B cell (primary cell): ENCODE measurements at regions of chr2 and their contacts with region 1.

Region 1: GRCh38 chr2:30165050-30165520 is 18.3 kb downstream of the YPEL5 start:
- DNase-seq: peak; percentile 87
- ATAC-seq: peak; percentile 100
- H3K4me3 ChIP-seq: no peak overlapping the region
- H3K4me3 Mint-ChIP-seq: no peak overlapping the region
- H3K27ac ChIP-seq: no peak overlapping the region
- H3K27ac Mint-ChIP-seq: no peak overlapping the region
- H3K4me1 ChIP-seq: peaks cover 8% of the 10 kb centered on the region in 2 donors
- H3K4me1 Mint-ChIP-seq: peaks cover 16% of the 10 kb centered on the region
- H3K27me3 ChIP-seq: no peaks in the 10 kb centered on the region
- H3K27me3 Mint-ChIP-seq: no peaks in the 10 kb centered on the region
- CTCF ChIP-seq: peak; percentile 85

Region 2: DNA sequence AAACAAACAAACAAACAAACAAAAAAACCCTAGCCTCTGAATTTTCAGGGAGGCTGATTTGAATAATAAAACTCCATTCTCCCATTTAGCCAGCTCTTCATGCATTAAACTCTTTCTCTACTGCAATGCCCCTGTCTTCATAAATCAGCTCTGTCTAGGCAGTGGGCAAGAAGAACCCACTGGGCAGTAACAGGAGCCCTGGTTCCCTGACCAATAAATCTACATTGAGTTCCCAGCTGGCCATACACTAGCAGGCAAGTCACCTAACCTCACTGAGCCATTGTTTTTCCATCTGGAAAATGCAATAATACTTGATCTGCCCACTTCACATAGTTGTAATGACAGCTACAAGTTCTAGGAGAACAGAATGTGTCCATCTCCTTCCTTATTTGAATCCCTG is 75.9 kb before region 1 on chr2:
- CTCF ChIA-PET with region 1: interaction called, 23 read pairs
- POLR2A ChIA-PET with region 1: no interaction called
- intact Hi-C with region 1: loop called (anchors 2 kb)
- DNase-seq: no peak
- ATAC-seq: no peak
- H3K4me3 ChIP-seq: no peak overlapping the region
- H3K4me3 Mint-ChIP-seq: no peak overlapping the region
- H3K27ac ChIP-seq: no peak overlapping the region
- H3K27ac Mint-ChIP-seq: no peak overlapping the region
- H3K4me1 ChIP-seq: no peaks in the 10 kb centered on the region
- H3K4me1 Mint-ChIP-seq: peaks cover 3% of the 10 kb centered on the region
- H3K27me3 ChIP-seq: peaks cover 0 to 24% (median 10%) of the 10 kb centered on the region in 4 experiments
- H3K27me3 Mint-ChIP-seq: peaks cover 42% of the 10 kb centered on the region
- CTCF ChIP-seq: no peak

Region 3: DNA sequence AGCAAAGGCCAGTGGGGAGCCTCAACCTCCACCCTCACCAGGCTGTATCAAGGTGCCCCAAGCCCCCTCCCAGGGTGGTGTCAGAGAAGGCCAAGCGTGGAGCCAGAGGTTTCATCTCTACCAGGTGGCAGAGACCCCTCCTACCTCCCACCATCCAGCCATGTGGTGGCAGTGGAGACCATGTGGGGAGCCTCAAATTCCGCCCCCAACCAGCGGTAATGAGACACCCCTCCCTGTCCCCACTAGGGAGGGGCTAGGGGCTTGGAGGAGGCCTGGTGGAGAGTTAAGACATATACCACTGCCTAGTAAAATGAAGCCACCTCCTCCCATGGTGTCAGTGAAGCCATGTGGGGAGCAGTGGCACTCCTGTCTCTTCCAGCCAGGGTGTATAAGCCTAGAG is 42.7 kb before region 1 on chr2:
- CTCF ChIA-PET with region 1: no interaction called
- POLR2A ChIA-PET with region 1: no interaction called
- intact Hi-C with region 1: no loop called
- DNase-seq: no peak
- ATAC-seq: no peak
- H3K4me3 ChIP-seq: no peak overlapping the region
- H3K4me3 Mint-ChIP-seq: no peak overlapping the region
- H3K27ac ChIP-seq: no peak overlapping the region
- H3K27ac Mint-ChIP-seq: no peak overlapping the region
- H3K4me1 ChIP-seq: no peaks in the 10 kb centered on the region
- H3K4me1 Mint-ChIP-seq: no peaks in the 10 kb centered on the region
- H3K27me3 ChIP-seq: peaks cover 0 to 28% (median 7%) of the 10 kb centered on the region in 4 experiments
- H3K27me3 Mint-ChIP-seq: peaks cover 32% of the 10 kb centered on the region
- CTCF ChIP-seq: no peak

Region 4: DNA sequence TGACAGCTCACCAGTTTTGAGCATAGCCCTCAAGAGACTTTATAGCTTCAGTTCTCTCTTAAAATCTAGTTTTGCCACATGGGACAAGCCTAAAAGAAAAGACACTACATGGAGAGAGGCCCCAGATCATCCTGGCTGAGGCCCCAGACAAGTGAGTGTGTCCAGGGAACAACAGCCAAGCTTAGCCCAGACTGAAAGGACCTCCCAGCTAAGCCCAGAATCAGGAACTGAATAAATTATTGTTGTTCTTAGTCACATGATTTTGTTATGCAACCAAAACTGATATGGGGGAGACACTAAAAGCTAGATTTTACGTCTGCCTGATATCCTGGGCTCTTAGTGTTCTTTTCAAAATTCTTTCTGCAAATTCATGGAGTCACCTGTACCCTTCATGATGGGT is 36.9 kb after region 1 on chr2:
- CTCF ChIA-PET with region 1: interaction called, 116 read pairs
- POLR2A ChIA-PET with region 1: no interaction called
- intact Hi-C with region 1: no loop called
- DNase-seq: no peak
- ATAC-seq: no peak
- H3K4me3 ChIP-seq: no peak overlapping the region
- H3K4me3 Mint-ChIP-seq: no peak overlapping the region
- H3K27ac ChIP-seq: no peak overlapping the region
- H3K27ac Mint-ChIP-seq: no peak overlapping the region
- H3K4me1 ChIP-seq: no peaks in the 10 kb centered on the region
- H3K4me1 Mint-ChIP-seq: no peaks in the 10 kb centered on the region
- H3K27me3 ChIP-seq: no peaks in the 10 kb centered on the region
- H3K27me3 Mint-ChIP-seq: no peaks in the 10 kb centered on the region
- CTCF ChIP-seq: no peak

Region 5: DNA sequence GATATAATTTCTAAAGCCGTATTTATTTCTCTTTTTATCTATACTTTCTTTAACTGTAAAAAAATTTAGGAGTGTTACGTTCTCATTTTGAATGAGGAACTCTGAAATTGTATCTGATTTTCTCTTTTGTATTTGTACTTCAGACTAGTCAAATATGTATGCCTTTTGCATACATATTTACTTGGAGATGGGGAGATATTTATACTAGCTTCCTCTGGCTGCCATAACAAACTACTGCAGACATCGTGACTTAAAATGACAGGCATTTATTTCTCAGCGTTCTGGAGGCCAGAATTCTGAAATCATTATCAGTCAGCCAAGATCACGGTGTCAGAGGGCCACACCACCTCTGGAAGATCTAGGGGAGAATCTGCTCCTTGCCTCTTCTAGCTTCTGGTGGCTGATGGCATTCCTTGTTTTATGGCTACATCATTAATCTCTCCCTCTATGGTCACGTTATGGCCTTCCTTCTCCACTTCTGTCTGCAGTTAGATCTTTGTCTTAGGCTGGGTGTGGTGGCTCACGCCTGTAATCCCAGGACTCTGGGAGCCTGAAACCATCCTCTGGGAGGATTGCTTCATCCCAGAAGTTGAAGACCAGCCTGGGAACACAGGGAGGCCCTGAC is 290.1 kb after region 1 on chr2:
- CTCF ChIA-PET with region 1: no interaction called
- POLR2A ChIA-PET with region 1: no interaction called
- intact Hi-C with region 1: no loop called
- DNase-seq: no peak
- ATAC-seq: no peak
- H3K4me3 ChIP-seq: no peak overlapping the region
- H3K4me3 Mint-ChIP-seq: no peak overlapping the region
- H3K27ac ChIP-seq: no peak overlapping the region
- H3K27ac Mint-ChIP-seq: no peak overlapping the region
- H3K4me1 ChIP-seq: peaks cover 13 to 17% of the 10 kb centered on the region in 2 donors
- H3K4me1 Mint-ChIP-seq: peaks cover 43% of the 10 kb centered on the region
- H3K27me3 ChIP-seq: no peaks in the 10 kb centered on the region
- H3K27me3 Mint-ChIP-seq: no peaks in the 10 kb centered on the region
- CTCF ChIP-seq: no peak

Region 6: DNA sequence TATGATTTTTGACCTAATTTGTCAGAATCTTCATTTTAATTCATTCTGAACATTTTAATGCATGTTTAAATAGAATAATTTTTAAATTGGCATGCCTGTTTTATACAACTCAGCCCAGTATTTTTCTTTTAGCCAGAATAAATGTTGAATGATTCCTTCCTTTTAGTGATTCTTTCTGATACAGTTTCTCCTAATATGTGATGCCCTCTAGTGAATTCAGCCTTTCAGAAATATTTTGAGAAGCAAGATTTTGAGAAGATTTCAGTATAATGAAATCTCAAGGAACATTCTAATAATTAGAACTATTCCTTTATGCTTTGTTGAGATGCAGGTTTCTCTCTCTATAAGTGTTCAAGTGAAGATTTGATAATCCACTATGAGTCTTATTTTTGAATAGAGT is 310.5 kb after region 1 on chr2:
- CTCF ChIA-PET with region 1: interaction called, 65 read pairs
- POLR2A ChIA-PET with region 1: no interaction called
- intact Hi-C with region 1: loop called (anchors 1 kb)
- DNase-seq: no peak
- ATAC-seq: no peak
- H3K4me3 ChIP-seq: no peak overlapping the region
- H3K4me3 Mint-ChIP-seq: no peak overlapping the region
- H3K27ac ChIP-seq: no peak overlapping the region
- H3K27ac Mint-ChIP-seq: no peak overlapping the region
- H3K4me1 ChIP-seq: peaks cover 8 to 17% of the 10 kb centered on the region in 2 donors
- H3K4me1 Mint-ChIP-seq: peaks cover 38% of the 10 kb centered on the region
- H3K27me3 ChIP-seq: no peaks in the 10 kb centered on the region
- H3K27me3 Mint-ChIP-seq: no peaks in the 10 kb centered on the region
- CTCF ChIP-seq: no peak

Region 7: GRCh38 chr2:30565851-30566358 is 400.8 kb after region 1 on chr2:
- CTCF ChIA-PET with region 1: no interaction called
- POLR2A ChIA-PET with region 1: no interaction called
- intact Hi-C with region 1: no loop called
- DNase-seq: no peak
- ATAC-seq: no peak
- H3K4me3 ChIP-seq: no peak overlapping the region
- H3K4me3 Mint-ChIP-seq: no peak overlapping the region
- H3K27ac ChIP-seq: no peak overlapping the region
- H3K27ac Mint-ChIP-seq: no peak overlapping the region
- H3K4me1 ChIP-seq: no peaks in the 10 kb centered on the region
- H3K4me1 Mint-ChIP-seq: no peaks in the 10 kb centered on the region
- H3K27me3 ChIP-seq: no peaks in the 10 kb centered on the region
- H3K27me3 Mint-ChIP-seq: no peaks in the 10 kb centered on the region
- CTCF ChIP-seq: no peak

Region 8: GRCh38 chr2:31523871-31524492 is 1358.9 kb after region 1 on chr2:
- CTCF ChIA-PET with region 1: interaction called, 11 read pairs
- POLR2A ChIA-PET with region 1: no interaction called
- intact Hi-C with region 1: no loop called
- DNase-seq: peak; percentile 64
- ATAC-seq: peak; percentile 64
- H3K4me3 ChIP-seq: no peak overlapping the region
- H3K4me3 Mint-ChIP-seq: no peak overlapping the region
- H3K27ac ChIP-seq: no peak overlapping the region
- H3K27ac Mint-ChIP-seq: no peak overlapping the region
- H3K4me1 ChIP-seq: no peaks in the 10 kb centered on the region
- H3K4me1 Mint-ChIP-seq: no peaks in the 10 kb centered on the region
- H3K27me3 ChIP-seq: peaks cover 0 to 6% (median 2%) of the 10 kb centered on the region in 4 experiments
- H3K27me3 Mint-ChIP-seq: peaks cover 37% of the 10 kb centered on the region
- CTCF ChIP-seq: peak; percentile 92